GM12878 (cell line): ENCODE measurements at regions of chr10 and their contacts with region 1.

Region 1: GRCh38 chr10:31864834-31865518 is 63.7 kb downstream of the ARHGAP12 start:
- DNase-seq: no peak
- ATAC-seq: no peak
- H3K4me3 ChIP-seq: no peak overlapping the region
- H3K27ac ChIP-seq: no peak overlapping the region
- H3K4me1 ChIP-seq: peaks cover 4% of the 10 kb centered on the region; the same call in 1 of the 2 replicates
- H3K27me3 ChIP-seq: no peaks in the 10 kb centered on the region
- CTCF ChIP-seq: no peak
- EP300 ChIP-seq: no peak
- POLR2A ChIP-seq: no peak
- RAD21 ChIP-seq: no peak

Region 2: DNA sequence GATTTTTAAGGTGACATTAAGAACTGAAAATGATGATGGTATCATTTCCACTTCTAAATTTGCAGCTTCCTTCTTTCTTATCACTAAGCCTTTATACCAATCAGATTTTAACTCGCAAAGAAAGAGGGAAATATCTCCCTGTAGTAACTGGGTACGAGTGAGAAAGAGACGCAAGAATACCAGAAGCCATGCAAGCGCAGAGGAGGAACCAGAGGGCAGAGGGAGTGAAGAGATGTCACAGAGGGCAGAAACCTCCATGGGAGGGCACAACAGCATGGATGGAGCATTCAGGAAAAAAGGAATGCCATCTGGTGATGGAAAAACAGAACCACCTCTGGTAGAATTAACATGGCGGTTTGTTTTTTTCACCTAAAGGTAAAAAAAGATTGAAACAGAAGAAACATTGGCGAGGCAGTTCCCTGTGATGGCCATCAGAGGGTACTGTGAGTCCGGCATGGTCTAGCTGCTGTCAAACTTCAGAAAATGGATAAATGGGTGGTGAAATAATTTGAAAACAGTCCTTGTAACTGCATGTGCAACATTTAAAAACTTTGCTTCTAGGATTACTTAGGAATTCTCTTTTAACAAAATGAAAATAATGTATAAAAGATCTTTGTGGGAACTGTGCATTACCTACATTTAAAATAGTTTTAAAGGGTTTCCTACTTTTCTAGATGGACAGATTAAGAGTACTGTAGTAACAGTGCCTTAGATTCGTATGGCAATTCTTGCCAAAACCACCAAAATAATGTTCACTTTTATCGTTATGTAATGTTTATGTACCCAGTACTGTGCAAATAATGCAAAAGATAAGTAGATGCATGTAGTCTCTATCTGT is 28.2 kb before region 1 on chr10:
- CTCF ChIA-PET with region 1: interaction called, 18 read pairs
- POLR2A ChIA-PET with region 1: interaction called, 4 read pairs
- RAD21 ChIA-PET with region 1: interaction called, 7 read pairs
- SMC1A ChIA-PET with region 1: interaction called, 4 read pairs
- in situ Hi-C with region 1: no loop called
- intact Hi-C with region 1: no loop called
- DNase-seq: no peak
- ATAC-seq: peak; percentile 79
- H3K4me3 ChIP-seq: no peak overlapping the region
- H3K27ac ChIP-seq: no peak overlapping the region
- H3K4me1 ChIP-seq: no peaks in the 10 kb centered on the region
- H3K27me3 ChIP-seq: no peaks in the 10 kb centered on the region
- CTCF ChIP-seq: peak; percentile 62 to 78 (median 63); a peak in 5 of 6 replicates
- EP300 ChIP-seq: no peak
- POLR2A ChIP-seq: no peak
- RAD21 ChIP-seq: peak; percentile 80

Region 3: GRCh38 chr10:31875608-31876007 is 10.6 kb after region 1 on chr10:
- CTCF ChIA-PET with region 1: interaction called, 14 read pairs
- POLR2A ChIA-PET with region 1: interaction called, 3 read pairs
- RAD21 ChIA-PET with region 1: interaction called, 7 read pairs
- SMC1A ChIA-PET with region 1: interaction called, 24 read pairs
- in situ Hi-C with region 1: no loop called
- intact Hi-C with region 1: no loop called
- DNase-seq: peak; percentile 21
- ATAC-seq: peak; percentile 93
- H3K4me3 ChIP-seq: no peak overlapping the region
- H3K27ac ChIP-seq: no peak overlapping the region
- H3K4me1 ChIP-seq: peaks cover 6% of the 10 kb centered on the region
- H3K27me3 ChIP-seq: no peaks in the 10 kb centered on the region
- CTCF ChIP-seq: no peak
- EP300 ChIP-seq: no peak
- POLR2A ChIP-seq: no peak
- RAD21 ChIP-seq: no peak

Region 4: DNA sequence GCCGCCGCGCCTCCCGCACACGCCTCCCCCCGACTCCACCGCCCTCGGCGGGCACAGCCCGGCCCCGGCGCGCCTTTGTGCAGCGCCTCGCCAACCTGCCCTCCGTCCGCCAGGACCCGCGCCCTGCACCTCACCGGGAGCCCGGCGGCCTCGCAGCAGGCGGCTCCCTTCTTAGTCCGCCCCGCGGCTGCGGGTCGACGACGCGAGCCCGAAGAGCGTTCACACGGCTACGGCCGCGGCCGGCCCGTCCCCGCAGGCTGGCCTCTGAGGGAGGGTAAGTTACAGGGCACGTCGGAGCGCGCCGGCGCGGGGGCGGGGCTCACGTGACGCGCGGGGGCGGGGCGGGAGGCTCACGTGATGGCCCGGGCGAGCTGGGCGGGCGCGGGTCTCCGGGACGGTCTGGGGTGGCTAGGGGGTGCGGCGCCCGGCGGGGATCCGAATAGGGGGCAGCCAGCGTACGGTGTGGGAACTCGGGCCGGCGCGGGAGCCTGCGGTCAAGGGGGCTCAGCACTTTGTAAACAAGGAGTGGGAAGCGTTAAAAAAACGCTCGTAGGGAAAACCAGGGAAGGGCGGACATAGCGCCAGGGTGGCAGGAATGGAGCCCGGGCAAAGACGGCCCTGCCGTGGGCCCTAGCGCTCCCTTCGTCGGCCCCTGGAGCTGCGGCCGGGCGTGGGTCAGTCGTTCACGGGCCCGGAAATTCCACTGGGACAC is 63.7 kb after region 1 on chr10 and contains the start of gene ARHGAP12:
- CTCF ChIA-PET with region 1: interaction called, 39 read pairs
- POLR2A ChIA-PET with region 1: interaction called, 14 read pairs
- RAD21 ChIA-PET with region 1: interaction called, 47 read pairs
- SMC1A ChIA-PET with region 1: interaction called, 46 read pairs
- in situ Hi-C with region 1: no loop called
- intact Hi-C with region 1: no loop called
- DNase-seq: no peak
- ATAC-seq: peak; percentile 84
- H3K4me3 ChIP-seq: peak within 1 kb of the TSS; percentile 70
- H3K27ac ChIP-seq: peak within 1 kb of the TSS; percentile 53
- H3K4me1 ChIP-seq: peaks cover 14% of the 10 kb centered on the region
- H3K27me3 ChIP-seq: no peaks in the 10 kb centered on the region
- CTCF ChIP-seq: no peak
- EP300 ChIP-seq: no peak
- POLR2A ChIP-seq: peak; percentile 89
- RAD21 ChIP-seq: no peak
- polyA plus RNA-seq, gene ARHGAP12: 5.4 to 7.7 TPM

Region 5: GRCh38 chr10:31994926-31995325 is 129.9 kb after region 1 on chr10:
- CTCF ChIA-PET with region 1: interaction called, 112 read pairs
- POLR2A ChIA-PET with region 1: no interaction called
- RAD21 ChIA-PET with region 1: interaction called, 11 read pairs
- SMC1A ChIA-PET with region 1: interaction called, 5 read pairs
- in situ Hi-C with region 1: no loop called
- intact Hi-C with region 1: no loop called
- DNase-seq: no peak
- ATAC-seq: no peak
- H3K4me3 ChIP-seq: no peak overlapping the region
- H3K27ac ChIP-seq: no peak overlapping the region
- H3K4me1 ChIP-seq: no peaks in the 10 kb centered on the region
- H3K27me3 ChIP-seq: no peaks in the 10 kb centered on the region
- CTCF ChIP-seq: no peak
- EP300 ChIP-seq: no peak
- POLR2A ChIP-seq: no peak
- RAD21 ChIP-seq: no peak

Region 6: DNA sequence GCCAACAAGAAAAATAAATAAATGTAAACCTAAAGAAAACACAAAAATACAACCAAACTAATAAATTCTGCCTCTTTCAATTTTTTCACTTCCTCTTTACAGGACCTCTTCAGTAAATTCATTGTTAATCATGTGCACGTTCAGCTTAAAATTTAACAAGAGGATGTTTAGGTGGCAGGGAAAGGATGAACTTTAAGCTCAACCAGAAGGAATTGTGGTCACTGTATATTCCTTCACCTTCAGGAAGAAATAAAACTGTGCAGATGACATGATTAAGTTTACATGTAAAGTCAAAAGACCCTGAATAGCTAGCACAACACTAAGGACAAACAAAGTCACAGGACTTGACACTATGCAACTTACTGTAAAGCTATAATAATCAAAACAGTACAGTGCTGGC is 158.3 kb after region 1 on chr10:
- CTCF ChIA-PET with region 1: interaction called, 10 read pairs
- POLR2A ChIA-PET with region 1: no interaction called
- RAD21 ChIA-PET with region 1: interaction called, 15 read pairs
- SMC1A ChIA-PET with region 1: interaction called, 9 read pairs
- in situ Hi-C with region 1: no loop called
- intact Hi-C with region 1: no loop called
- DNase-seq: no peak
- ATAC-seq: peak; percentile 55
- H3K4me3 ChIP-seq: no peak overlapping the region
- H3K27ac ChIP-seq: no peak overlapping the region
- H3K4me1 ChIP-seq: peaks cover 3% of the 10 kb centered on the region; the same call in 1 of the 2 replicates
- H3K27me3 ChIP-seq: no peaks in the 10 kb centered on the region
- CTCF ChIP-seq: no peak
- EP300 ChIP-seq: no peak
- POLR2A ChIP-seq: no peak
- RAD21 ChIP-seq: no peak

Region 7: GRCh38 chr10:32367793-32368453 is 502.9 kb after region 1 on chr10:
- CTCF ChIA-PET with region 1: no interaction called
- POLR2A ChIA-PET with region 1: no interaction called
- RAD21 ChIA-PET with region 1: no interaction called
- SMC1A ChIA-PET with region 1: no interaction called
- in situ Hi-C with region 1: no loop called
- intact Hi-C with region 1: loop called (anchors 10 kb)
- DNase-seq: no peak
- ATAC-seq: peak; percentile 65
- H3K4me3 ChIP-seq: no peak overlapping the region
- H3K27ac ChIP-seq: no peak overlapping the region
- H3K4me1 ChIP-seq: no peaks in the 10 kb centered on the region
- H3K27me3 ChIP-seq: no peaks in the 10 kb centered on the region
- CTCF ChIP-seq: peak; percentile 61 to 80 (median 69)
- EP300 ChIP-seq: no peak
- POLR2A ChIP-seq: no peak
- RAD21 ChIP-seq: peak; percentile 75